Common myeloid progenitor, CD34-positive (primary cell): ENCODE measurements at regions of chr12 and their contacts with region 1.

Region 1: DNA sequence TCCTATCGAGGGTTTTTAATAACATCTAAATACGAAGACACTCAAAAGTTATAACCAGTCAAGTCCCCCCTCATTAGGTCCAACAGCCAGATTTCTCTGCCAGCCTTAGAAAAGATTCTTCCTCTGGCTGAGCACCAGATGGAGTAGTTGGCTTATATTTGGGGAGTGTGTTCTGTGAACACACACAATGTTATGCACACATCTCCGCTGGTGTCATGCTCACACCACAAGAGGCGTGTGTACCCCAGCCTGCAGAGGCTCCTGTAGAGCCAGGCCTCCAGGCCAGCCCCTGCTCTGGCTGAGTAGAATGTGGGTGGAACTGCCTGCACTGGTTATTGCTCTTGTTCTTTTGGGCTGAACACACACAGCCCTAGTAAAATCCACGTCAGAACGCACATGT is 64.0 kb downstream of the PIWIL1 start:
- DNase-seq: peak; percentile 8 to 67 (median 66)
- H3K4me3 ChIP-seq: no peak overlapping the region
- H3K27ac ChIP-seq: no peak overlapping the region
- H3K4me1 ChIP-seq: peaks cover 0 to 6% (median 0%) of the 10 kb centered on the region in 4 experiments
- H3K27me3 ChIP-seq: peaks cover 0 to 6% (median 0%) of the 10 kb centered on the region in 5 experiments

Region 2: GRCh38 chr12:130375296-130376287 is 26.1 kb before region 1 on chr12:
- CTCF ChIA-PET with region 1: no interaction called
- POLR2A ChIA-PET with region 1: no interaction called
- DNase-seq: no peak
- H3K4me3 ChIP-seq: no peak overlapping the region
- H3K27ac ChIP-seq: no peak overlapping the region
- H3K4me1 ChIP-seq: no peaks in the 10 kb centered on the region
- H3K27me3 ChIP-seq: peaks cover 0 to 34% (median 2%) of the 10 kb centered on the region in 5 experiments

Region 3: DNA sequence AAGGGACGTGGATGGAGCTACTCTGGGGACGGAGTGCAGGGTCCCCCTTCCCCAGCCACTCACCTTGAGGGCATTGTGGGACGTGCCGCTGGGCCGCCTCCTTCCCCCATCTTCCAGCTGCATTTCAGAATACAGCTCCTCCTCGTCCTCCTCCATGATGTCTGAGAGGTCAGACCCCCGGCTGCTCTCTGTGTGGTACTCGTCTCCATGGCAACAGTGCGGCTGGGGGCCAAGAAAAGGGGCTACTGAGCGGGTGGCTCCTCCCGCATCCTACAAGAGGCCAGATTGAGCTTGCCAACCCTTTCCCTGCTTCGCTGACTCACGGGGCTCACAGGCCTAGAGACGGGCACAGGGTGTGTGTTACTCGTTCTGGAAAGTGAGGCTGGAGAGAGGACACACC is 26.4 kb after region 1 on chr12:
- CTCF ChIA-PET with region 1: no interaction called
- POLR2A ChIA-PET with region 1: no interaction called
- DNase-seq: no peak
- H3K4me3 ChIP-seq: no peak overlapping the region
- H3K27ac ChIP-seq: no peak overlapping the region
- H3K4me1 ChIP-seq: no peaks in the 10 kb centered on the region
- H3K27me3 ChIP-seq: peaks cover 0 to under 1% (median 0%) of the 10 kb centered on the region in 5 experiments

Region 4: DNA sequence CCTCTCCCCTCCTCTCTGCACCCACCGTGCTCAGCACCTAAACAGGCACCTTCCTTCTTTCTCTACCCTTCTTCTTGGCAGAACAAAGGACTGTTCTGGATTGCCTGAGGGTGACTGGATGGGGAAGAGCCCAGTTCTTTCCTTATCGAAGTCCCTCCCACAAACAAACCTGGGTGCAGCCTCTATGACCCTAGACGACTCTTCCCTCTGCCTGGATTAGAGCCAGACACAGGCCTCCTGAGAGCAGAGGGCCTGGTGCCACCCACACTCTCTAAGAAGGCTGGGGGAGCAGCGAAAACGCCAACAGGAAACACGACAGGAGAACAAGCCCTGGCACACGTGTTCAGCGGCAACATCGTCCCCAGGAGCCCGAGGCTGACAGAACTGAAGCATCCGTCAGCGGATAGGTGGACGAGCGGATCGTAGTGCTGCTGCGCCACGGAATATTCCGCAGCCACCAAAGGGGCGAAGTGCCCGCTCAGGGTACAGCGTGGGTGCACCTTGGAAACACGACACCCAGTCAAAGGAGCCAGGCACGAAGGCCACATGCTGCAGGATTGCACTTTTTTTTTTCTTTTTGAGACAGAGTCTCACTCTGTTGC is 276.4 kb after region 1 on chr12:
- CTCF ChIA-PET with region 1: no interaction called
- POLR2A ChIA-PET with region 1: no interaction called
- DNase-seq: no peak
- H3K4me3 ChIP-seq: no peak overlapping the region
- H3K27ac ChIP-seq: no peak overlapping the region
- H3K4me1 ChIP-seq: peaks cover 0 to 2% (median 0%) of the 10 kb centered on the region in 4 experiments
- H3K27me3 ChIP-seq: peaks cover 0 to 12% (median 0%) of the 10 kb centered on the region in 5 experiments

Region 5: GRCh38 chr12:130747867-130748740 is 346.4 kb after region 1 on chr12:
- CTCF ChIA-PET with region 1: interaction called, 25 read pairs
- POLR2A ChIA-PET with region 1: no interaction called
- DNase-seq: peak; percentile 85 to 95 (median 93)
- H3K4me3 ChIP-seq: peak overlapping the region in 2 of 7 experiments; percentile 17 to 39
- H3K27ac ChIP-seq: no peak overlapping the region
- H3K4me1 ChIP-seq: peaks cover 0 to 21% (median 15%) of the 10 kb centered on the region in 4 experiments
- H3K27me3 ChIP-seq: no peaks in the 10 kb centered on the region